Heart left ventricle (tissue), 16 donors: ENCODE measurements at regions of chr21 and their contacts with region 1.

Region 1: DNA sequence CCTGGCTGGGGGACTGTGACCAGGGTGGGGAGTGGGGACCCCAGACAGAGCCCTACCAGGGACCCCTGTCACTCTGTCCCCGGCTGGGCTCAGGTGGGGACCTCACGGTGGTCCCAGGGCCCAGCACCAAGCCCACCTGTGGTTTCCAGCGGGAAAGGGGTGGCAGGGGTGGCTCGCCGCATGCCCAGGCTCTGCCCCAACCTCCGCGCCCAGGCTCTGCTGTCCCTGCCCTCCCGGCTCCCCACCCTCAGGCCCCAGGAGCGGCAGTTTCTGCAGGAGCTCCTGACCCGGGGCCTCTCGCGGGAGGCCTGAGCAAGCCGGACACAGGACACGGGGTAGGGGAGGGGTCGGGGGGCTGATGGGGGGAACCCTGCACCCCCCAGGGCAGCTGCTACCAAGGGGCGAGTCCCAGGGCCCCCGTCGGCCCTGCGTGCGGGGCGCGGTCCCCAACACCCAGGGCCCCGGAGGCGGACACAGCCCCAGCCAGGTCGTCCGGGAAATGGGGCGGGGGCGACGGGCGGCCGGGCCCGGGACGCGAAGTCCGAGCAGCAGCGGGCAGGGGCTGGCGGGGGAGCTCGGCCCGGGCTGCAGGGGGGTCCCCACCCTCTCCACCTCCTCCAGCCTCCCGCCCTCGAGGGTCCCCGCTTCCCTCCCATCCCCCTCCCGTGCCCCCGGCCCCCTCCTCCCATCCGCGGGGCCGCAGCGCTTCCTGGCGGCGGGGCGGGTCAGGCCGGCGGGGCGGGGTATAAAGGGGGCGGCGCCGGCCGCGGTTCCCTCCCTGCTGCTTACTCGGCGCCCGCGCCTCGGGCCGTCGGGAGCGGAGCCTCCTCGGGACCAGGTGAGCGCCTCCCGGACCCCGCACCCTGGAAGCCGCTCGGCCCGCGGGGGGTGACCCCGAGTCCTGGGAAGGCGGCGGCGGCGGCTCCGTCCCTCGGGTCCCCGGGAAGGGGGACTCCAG is at the start of gene COL6A2:
- DNase-seq: peak; percentile 67 to 86 (median 76)
- ATAC-seq: peak; percentile 68 to 89 (median 82)
- H3K4me3 ChIP-seq: peak within 1 kb of the TSS; percentile 68 to 97 (median 87)
- H3K27ac ChIP-seq: peak within 1 kb of the TSS; percentile 73 to 99 (median 94)
- H3K4me1 ChIP-seq: peaks cover 0 to 34% (median 10%) of the 10 kb centered on the region in 12 donors
- H3K27me3 ChIP-seq: peaks cover 0 to 20% (median 0%) of the 10 kb centered on the region in 9 donors
- CTCF ChIP-seq: peak in 10 of 12 donors; percentile 16 to 66 (median 48)
- POLR2A ChIP-seq: peak in 1 of 2 donors; percentile 80
- total RNA-seq, gene COL6A2: 118 to 484 (median 158) TPM

Region 2: DNA sequence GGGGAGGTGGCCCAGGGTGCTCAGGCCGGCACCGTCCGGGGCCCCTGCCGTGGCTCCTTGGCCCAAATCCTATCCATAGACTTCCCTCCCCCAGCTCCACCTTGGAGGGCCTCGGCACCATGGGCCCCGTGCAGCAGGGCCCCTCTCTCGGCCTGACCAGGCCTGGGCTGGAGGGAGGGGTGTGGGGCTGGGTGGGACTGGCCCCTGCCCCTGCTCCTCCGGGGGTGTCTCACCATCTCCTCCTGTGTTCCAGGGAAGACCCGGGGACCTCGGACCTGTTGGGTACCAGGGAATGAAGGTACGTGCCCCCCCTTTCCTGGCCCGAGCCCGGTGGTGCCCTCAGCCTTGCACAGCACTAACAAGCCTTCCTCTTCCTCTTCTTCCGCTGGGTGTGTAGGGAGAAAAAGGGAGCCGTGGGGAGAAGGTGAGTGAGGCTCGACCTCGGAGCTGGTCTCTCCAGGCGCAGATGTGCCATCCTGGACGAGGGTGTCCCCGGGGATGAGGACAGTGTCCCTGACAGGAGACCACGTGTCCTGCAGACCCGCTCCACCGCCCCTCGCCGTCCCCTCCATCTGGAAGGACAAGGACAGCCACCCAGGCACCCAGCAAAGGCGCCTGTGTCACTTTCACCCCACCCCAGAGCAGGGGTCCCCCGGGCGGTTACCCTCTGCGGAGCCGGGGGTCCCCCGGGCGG is 108.1 kb before region 1 on chr21:
- intact Hi-C with region 1: loop called in 1 of 10 experiments (anchors 5 kb)
- DNase-seq: peak; percentile 13 to 52 (median 20)
- ATAC-seq: no peak
- H3K4me3 ChIP-seq: no peak overlapping the region
- H3K27ac ChIP-seq: peak overlapping the region in 1 of 12 donors; percentile 80
- H3K4me1 ChIP-seq: peaks cover 0 to 38% (median 4%) of the 10 kb centered on the region in 12 donors
- H3K27me3 ChIP-seq: no peaks in the 10 kb centered on the region
- CTCF ChIP-seq: no peak
- POLR2A ChIP-seq: no peak

Region 3: GRCh38 chr21:46022551-46023525 is 74.8 kb before region 1 on chr21:
- intact Hi-C with region 1: loop called in 1 of 10 experiments (anchors 10 kb)
- DNase-seq: peak in 2 of 5 donors; percentile 34 to 67
- ATAC-seq: peak; percentile 24 to 84 (median 72)
- H3K4me3 ChIP-seq: peak overlapping the region in 4 of 12 donors; percentile 7 to 36 (median 16)
- H3K27ac ChIP-seq: peak overlapping the region in 5 of 12 donors; percentile 26 to 86 (median 31)
- H3K4me1 ChIP-seq: peaks cover 0 to 9% (median 0%) of the 10 kb centered on the region in 12 donors
- H3K27me3 ChIP-seq: no peaks in the 10 kb centered on the region
- CTCF ChIP-seq: no peak
- POLR2A ChIP-seq: no peak

Region 4: GRCh38 chr21:46130831-46131587 is 33.4 kb after region 1 on chr21:
- intact Hi-C with region 1: no loop called
- DNase-seq: peak in 3 of 5 donors; percentile 39 to 63 (median 41)
- ATAC-seq: no peak
- H3K4me3 ChIP-seq: no peak overlapping the region
- H3K27ac ChIP-seq: peak overlapping the region in 1 of 12 donors; percentile 47
- H3K4me1 ChIP-seq: peaks cover 0 to 18% (median 5%) of the 10 kb centered on the region in 12 donors
- H3K27me3 ChIP-seq: no peaks in the 10 kb centered on the region
- CTCF ChIP-seq: no peak
- POLR2A ChIP-seq: no peak

Region 5: GRCh38 chr21:46160907-46161632 is 63.5 kb after region 1 on chr21:
- intact Hi-C with region 1: no loop called
- DNase-seq: peak; percentile 5 to 51 (median 17)
- ATAC-seq: no peak
- H3K4me3 ChIP-seq: peak overlapping the region in 3 of 12 donors; percentile 20 to 33 (median 22)
- H3K27ac ChIP-seq: no peak overlapping the region
- H3K4me1 ChIP-seq: no peaks in the 10 kb centered on the region
- H3K27me3 ChIP-seq: peaks cover 0 to 9% (median 0%) of the 10 kb centered on the region in 9 donors
- CTCF ChIP-seq: no peak
- POLR2A ChIP-seq: no peak